ENCODE measurements at regions of chr3 and their contacts with region 1.

Region 1: DNA sequence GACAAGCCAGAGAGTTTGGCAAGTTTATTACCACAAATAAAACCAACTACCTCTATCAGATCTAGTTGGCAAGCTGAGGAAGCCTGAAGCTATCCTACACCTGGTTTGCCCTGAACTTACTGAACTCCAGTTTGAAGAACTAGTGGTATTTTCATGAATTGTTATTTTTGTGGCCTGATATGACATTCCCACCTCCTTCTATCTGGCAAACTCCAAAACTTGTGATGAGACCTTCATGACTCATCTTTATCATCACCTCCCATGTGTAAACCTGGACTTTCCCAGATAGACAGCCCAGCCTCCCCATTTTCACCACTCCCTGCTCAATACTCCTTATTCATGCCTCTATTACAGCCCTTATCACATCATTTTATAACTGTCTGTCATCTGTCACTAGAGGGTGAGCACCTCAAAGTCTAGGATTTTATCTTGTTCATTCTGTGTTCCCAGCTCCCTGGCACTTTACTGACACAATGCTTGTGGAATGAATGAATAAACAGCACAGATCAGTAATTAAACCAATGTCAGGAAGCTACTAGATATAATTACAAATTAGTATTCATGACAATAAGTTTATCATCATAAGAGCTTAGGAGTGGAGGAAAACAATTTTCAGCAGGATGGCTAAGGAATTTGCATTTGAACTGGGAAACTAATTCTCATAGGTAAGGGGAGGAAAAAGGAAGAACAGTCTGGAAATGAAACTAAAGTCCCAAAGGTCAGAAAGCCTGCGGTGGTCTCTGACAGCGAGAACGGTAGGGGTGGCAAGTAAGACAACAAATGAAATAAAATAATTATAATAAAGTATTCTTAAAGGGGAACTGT is 13.2 kb upstream of the TRANK1 start:
- DNase-seq: no peak
- ATAC-seq: no peak
- H3K4me3 ChIP-seq: no peak overlapping the region
- H3K4me3 Mint-ChIP-seq: peak overlapping the region in 4 of 10 donors; percentile 2 to 21 (median 13)
- H3K27ac ChIP-seq: no peak overlapping the region
- H3K27ac Mint-ChIP-seq: peak overlapping the region in 8 of 9 donors; percentile 12 to 88 (median 45)
- H3K4me1 ChIP-seq: no peaks in the 10 kb centered on the region
- H3K4me1 Mint-ChIP-seq: peaks cover 2 to 12% (median 11%) of the 10 kb centered on the region in 7 donors
- H3K27me3 ChIP-seq: no peaks in the 10 kb centered on the region
- H3K27me3 Mint-ChIP-seq: peaks cover 0 to 3% (median 0%) of the 10 kb centered on the region in 5 donors

Region 2: DNA sequence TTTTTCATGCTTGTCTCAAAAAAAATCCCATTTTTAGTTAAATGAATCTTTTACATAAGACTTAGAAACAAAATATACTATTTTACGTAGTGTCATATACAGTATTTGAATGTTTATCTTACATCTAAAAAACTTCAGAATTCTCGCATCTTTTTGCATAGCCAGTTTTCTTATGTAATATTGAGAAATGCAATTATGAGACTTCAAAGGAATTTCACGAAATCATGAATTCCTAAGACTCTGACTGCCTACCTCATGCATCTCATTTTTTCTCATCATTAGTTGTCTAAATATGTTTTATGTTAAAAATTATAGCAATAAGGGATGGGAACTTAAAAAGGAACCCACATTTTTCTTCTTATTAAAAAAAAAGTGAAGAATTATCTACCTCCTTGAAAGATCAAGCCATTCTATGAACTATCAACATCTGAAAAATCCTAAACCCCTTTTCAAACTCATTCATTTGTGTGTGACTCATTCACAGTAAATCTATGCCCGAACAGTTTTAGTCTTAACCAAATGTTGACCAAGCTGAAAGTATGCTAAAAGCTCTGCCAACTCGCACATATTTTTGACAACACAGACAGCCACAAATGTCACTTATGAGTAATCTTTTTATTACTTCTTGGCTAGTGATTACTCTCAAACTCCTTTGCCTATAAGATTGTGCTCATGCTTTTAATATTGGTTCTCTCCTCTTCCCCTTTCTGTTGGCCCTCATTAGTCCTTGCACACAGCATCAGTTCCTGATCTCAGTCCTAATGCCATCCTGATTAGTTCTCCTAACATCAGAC is 309.6 kb before region 1 on chr3:
- CTCF ChIA-PET with region 1: no interaction called
- POLR2A ChIA-PET with region 1: no interaction called
- intact Hi-C with region 1: no loop called
- DNase-seq: no peak
- ATAC-seq: no peak
- H3K4me3 ChIP-seq: no peak overlapping the region
- H3K4me3 Mint-ChIP-seq: no peak overlapping the region
- H3K27ac ChIP-seq: no peak overlapping the region
- H3K27ac Mint-ChIP-seq: no peak overlapping the region
- H3K4me1 ChIP-seq: no peaks in the 10 kb centered on the region
- H3K4me1 Mint-ChIP-seq: no peaks in the 10 kb centered on the region
- H3K27me3 ChIP-seq: no peaks in the 10 kb centered on the region
- H3K27me3 Mint-ChIP-seq: peaks cover 0 to 45% (median 44%) of the 10 kb centered on the region in 5 donors

Region 3: DNA sequence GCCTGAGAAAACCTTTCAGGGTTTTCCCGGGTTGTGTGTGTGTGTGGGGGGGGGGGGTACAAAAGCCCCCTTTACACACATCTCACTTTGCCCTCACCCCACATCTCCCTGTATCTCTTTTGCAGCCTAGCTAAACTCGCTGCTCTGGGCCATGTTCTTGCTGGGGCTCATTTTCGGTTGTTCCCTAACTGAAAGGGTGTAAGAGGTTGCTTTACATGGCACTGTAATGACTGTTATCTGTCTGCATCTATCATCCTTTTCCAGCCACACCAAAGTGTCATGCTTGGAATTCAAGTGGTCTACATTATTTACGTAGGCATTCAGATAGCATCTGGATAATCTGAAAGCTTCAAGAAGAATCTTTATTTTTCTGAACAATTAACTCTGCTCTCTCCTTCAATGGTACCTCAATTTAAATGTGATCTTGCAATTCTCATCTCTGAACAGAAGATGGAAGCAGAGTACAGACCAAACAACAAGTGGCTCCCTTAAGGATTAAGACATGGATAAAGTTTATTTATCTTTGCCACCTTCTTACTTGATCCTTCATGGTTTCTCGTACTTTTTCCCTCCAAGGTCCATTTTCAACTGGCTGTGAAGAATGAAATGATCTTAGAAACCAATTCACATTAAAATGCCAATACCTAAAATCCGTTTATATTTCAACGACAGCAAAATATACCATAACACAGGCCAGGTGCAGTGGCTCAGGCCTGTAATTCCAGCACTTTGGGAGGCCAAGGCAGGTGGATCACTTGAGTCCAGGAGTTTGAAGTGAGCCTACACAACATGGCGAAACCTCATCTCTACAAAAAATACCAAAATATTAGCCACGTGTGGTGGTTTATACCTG is 228.6 kb before region 1 on chr3:
- CTCF ChIA-PET with region 1: interaction called, 7 read pairs
- POLR2A ChIA-PET with region 1: no interaction called
- intact Hi-C with region 1: loop called in 1 of 2 experiments (anchors 1 kb)
- DNase-seq: peak in 4 of 9 donors; percentile 5 to 25 (median 18)
- ATAC-seq: peak; percentile 56
- H3K4me3 ChIP-seq: no peak overlapping the region
- H3K4me3 Mint-ChIP-seq: no peak overlapping the region
- H3K27ac ChIP-seq: no peak overlapping the region
- H3K27ac Mint-ChIP-seq: no peak overlapping the region
- H3K4me1 ChIP-seq: no peaks in the 10 kb centered on the region
- H3K4me1 Mint-ChIP-seq: no peaks in the 10 kb centered on the region
- H3K27me3 ChIP-seq: no peaks in the 10 kb centered on the region
- H3K27me3 Mint-ChIP-seq: peaks cover 0 to 12% (median 7%) of the 10 kb centered on the region in 5 donors

Region 4: DNA sequence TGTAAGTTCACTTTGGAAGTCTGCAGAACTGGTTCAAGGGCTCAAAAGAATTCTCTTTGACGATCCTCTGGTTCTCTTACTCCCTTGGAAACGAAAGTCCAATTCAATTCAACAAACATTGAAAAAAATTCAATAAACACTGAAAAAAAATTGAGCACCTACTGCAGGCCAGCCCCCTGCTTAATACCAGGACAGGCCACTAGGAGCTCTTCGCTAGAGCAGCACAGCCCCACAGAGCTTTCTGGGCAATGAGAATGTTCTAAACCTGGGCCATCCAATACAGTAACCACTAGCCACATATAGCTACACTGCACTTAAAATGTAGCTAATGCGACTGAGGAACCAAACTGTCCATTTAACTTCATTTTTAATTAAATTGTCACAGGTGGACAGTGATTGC is 143.3 kb before region 1 on chr3:
- CTCF ChIA-PET with region 1: no interaction called
- POLR2A ChIA-PET with region 1: no interaction called
- intact Hi-C with region 1: no loop called
- DNase-seq: no peak
- ATAC-seq: no peak
- H3K4me3 ChIP-seq: no peak overlapping the region
- H3K4me3 Mint-ChIP-seq: no peak overlapping the region
- H3K27ac ChIP-seq: no peak overlapping the region
- H3K27ac Mint-ChIP-seq: no peak overlapping the region
- H3K4me1 ChIP-seq: no peaks in the 10 kb centered on the region
- H3K4me1 Mint-ChIP-seq: no peaks in the 10 kb centered on the region
- H3K27me3 ChIP-seq: no peaks in the 10 kb centered on the region
- H3K27me3 Mint-ChIP-seq: peaks cover 0 to 2% (median 0%) of the 10 kb centered on the region in 5 donors

Region 5: DNA sequence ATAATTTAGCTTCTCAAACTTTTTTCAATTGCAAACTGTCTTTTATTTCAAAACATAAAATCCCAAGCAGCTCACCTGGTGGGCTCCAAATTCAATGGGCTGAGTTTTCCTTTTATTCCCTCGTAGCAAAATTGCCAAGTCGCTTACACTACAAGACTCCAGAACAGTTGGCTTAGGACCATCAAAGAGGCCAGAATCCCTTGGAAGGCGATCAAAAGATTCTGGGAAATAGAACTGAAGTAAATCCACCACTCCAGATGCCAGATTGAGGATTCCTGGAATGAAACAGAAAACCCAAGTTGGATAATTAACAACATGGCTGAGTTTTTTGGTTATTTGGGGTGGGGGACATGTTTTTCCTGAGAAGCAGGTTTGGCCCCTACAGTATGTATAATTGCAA is 106.0 kb before region 1 on chr3:
- CTCF ChIA-PET with region 1: interaction called, 12 read pairs
- POLR2A ChIA-PET with region 1: no interaction called
- intact Hi-C with region 1: no loop called
- DNase-seq: no peak
- ATAC-seq: no peak
- H3K4me3 ChIP-seq: no peak overlapping the region
- H3K4me3 Mint-ChIP-seq: no peak overlapping the region
- H3K27ac ChIP-seq: no peak overlapping the region
- H3K27ac Mint-ChIP-seq: peak overlapping the region in 1 of 9 donors; percentile 19
- H3K4me1 ChIP-seq: no peaks in the 10 kb centered on the region
- H3K4me1 Mint-ChIP-seq: peaks cover 0 to 9% (median 4%) of the 10 kb centered on the region in 7 donors
- H3K27me3 ChIP-seq: no peaks in the 10 kb centered on the region
- H3K27me3 Mint-ChIP-seq: no peaks in the 10 kb centered on the region

Region 6: DNA sequence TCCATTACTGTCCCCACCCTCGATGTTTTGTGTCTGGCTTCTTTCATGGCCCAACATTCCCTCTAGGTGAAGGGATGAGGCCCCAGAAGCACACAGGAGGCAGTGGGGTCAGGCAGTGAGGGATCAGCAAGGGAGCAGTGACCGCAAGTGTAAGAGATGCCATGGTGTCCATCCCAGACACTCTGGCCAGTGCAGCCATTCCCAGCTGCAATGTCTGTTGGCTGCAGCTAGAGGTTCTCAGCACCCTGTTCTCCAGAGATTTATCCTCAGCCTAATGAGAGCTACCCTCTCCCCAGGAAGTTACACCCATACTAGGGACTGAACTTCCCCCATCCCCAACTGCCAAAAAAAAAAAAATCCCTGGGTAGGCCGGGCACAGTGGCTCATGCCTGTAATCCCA is 53.4 kb before region 1 on chr3:
- CTCF ChIA-PET with region 1: interaction called, 27 read pairs
- POLR2A ChIA-PET with region 1: interaction called, 3 read pairs
- intact Hi-C with region 1: loop called (anchors 1 kb)
- DNase-seq: no peak
- ATAC-seq: no peak
- H3K4me3 ChIP-seq: no peak overlapping the region
- H3K4me3 Mint-ChIP-seq: peak overlapping the region in 7 of 10 donors; percentile 6 to 95 (median 35)
- H3K27ac ChIP-seq: peak overlapping the region; percentile 26
- H3K27ac Mint-ChIP-seq: peak overlapping the region in 8 of 9 donors; percentile 69 to 97 (median 92)
- H3K4me1 ChIP-seq: peaks cover 42 to 60% of the 10 kb centered on the region in 2 donors
- H3K4me1 Mint-ChIP-seq: peaks cover 54 to 90% (median 84%) of the 10 kb centered on the region in 7 donors
- H3K27me3 ChIP-seq: no peaks in the 10 kb centered on the region
- H3K27me3 Mint-ChIP-seq: no peaks in the 10 kb centered on the region

Region 7: DNA sequence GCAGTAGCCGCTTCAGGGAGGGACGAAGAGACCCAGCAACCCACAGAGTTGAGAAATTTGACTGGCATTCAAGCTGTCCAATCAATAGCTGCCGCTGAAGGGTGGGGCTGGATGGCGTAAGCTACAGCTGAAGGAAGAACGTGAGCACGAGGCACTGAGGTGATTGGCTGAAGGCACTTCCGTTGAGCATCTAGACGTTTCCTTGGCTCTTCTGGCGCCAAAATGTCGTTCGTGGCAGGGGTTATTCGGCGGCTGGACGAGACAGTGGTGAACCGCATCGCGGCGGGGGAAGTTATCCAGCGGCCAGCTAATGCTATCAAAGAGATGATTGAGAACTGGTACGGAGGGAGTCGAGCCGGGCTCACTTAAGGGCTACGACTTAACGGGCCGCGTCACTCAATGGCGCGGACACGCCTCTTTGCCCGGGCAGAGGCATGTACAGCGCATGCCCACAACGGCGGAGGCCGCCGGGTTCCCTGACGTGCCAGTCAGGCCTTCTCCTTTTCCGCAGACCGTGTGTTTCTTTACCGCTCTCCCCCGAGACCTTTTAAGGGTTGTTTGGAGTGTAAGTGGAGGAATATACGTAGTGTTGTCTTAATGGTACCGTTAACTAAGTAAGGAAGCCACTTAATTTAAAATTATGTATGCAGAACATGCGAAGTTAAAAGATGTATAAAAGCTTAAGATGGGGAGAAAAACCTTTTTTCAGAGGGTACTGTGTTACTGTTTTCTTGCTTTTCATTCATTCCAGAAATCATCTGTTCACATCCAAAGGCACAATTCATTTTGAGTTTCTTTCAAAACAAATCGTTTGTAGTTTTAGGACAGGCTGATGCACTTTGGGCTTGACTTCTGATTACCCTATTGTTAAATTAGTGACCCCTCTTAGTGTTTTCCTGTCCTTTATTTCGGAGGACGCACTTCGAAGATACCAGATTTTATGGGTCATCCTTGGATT is 35.5 kb after region 1 on chr3 and contains the start of gene MLH1:
- CTCF ChIA-PET with region 1: interaction called, 5 read pairs
- POLR2A ChIA-PET with region 1: interaction called, 3 read pairs
- intact Hi-C with region 1: loop called in 1 of 2 experiments (anchors 1 kb)
- DNase-seq: peak; percentile 91 to 100 (median 99)
- ATAC-seq: peak; percentile 90
- H3K4me3 ChIP-seq: peak within 1 kb of the TSS; percentile 80
- H3K4me3 Mint-ChIP-seq: peak within 1 kb of the TSS in 1 of 10 donors; percentile 26
- H3K27ac ChIP-seq: peak within 1 kb of the TSS; percentile 83
- H3K27ac Mint-ChIP-seq: no peak within 1 kb of the TSS
- H3K4me1 ChIP-seq: peaks cover 36 to 40% of the 10 kb centered on the region in 2 donors
- H3K4me1 Mint-ChIP-seq: peaks cover 23 to 43% (median 38%) of the 10 kb centered on the region in 7 donors
- H3K27me3 ChIP-seq: no peaks in the 10 kb centered on the region
- H3K27me3 Mint-ChIP-seq: no peaks in the 10 kb centered on the region
- total RNA-seq, gene MLH1: 26.4 to 42.0 (median 31.7) TPM

Measured in naive thymus-derived CD4-positive, alpha-beta T cell (primary cell).